IMR-90 (cell line): ENCODE measurements at regions of chr5 and their contacts with region 1.

Region 1: GRCh38 chr5:149434162-149435014 is 55.3 kb upstream of the IL17B start:
- DNase-seq: peak; percentile 82
- ATAC-seq: peak; percentile 55
- H3K4me3 ChIP-seq: no peak overlapping the region
- H3K27ac ChIP-seq: no peak overlapping the region
- H3K4me1 ChIP-seq: peaks cover 8% of the 10 kb centered on the region; the same call in 1 of the 2 replicates
- H3K27me3 ChIP-seq: no peaks in the 10 kb centered on the region
- CTCF ChIP-seq: peak; percentile 92
- POLR2A ChIP-seq: peak; percentile 55
- RAD21 ChIP-seq: peak; percentile 80

Region 2: GRCh38 chr5:147835386-147835798 is 1599.0 kb before region 1 on chr5:
- CTCF ChIA-PET with region 1: no interaction called
- POLR2A ChIA-PET with region 1: no interaction called
- dilution Hi-C with region 1: no loop called
- in situ Hi-C with region 1: no loop called
- intact Hi-C with region 1: no loop called
- DNase-seq: no peak
- ATAC-seq: no peak
- H3K4me3 ChIP-seq: no peak overlapping the region
- H3K27ac ChIP-seq: no peak overlapping the region
- H3K4me1 ChIP-seq: no peaks in the 10 kb centered on the region
- H3K27me3 ChIP-seq: no peaks in the 10 kb centered on the region
- CTCF ChIP-seq: no peak
- POLR2A ChIP-seq: no peak
- RAD21 ChIP-seq: no peak

Region 3: DNA sequence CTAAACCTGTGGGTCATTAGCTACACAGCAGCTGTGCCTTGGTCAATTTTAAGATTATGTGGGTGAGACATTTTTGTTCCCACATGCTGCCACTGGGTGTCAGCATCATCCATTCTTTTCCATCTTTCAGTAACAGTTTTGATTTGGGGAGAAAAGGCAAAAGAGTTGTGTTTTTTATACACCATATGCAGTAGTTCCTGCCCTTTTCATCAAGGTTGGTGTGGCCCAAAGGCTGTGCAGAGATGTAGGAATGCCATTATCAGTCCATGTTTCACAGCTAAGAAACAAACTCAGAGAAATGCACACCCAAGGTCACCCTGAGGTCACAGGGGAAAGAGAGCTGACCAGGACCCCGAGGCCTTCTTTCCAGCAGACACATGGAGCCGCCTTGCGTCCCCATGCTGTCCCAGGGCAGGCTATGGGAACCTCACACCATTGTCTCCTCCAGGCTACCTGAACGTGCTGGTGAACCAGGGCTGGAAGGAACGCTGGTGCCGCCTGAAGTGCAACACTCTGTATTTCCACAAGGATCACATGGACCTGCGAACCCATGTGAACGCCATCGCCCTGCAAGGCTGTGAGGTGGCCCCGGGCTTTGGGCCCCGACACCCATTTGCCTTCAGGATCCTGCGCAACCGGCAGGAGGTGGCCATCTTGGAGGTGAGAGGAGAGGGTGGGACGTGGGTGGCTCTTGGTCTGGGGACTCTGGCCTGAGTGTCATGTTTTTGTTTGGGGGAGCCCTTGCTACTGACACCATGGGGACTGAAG is 116.9 kb before region 1 on chr5:
- CTCF ChIA-PET with region 1: interaction called, 3 read pairs
- POLR2A ChIA-PET with region 1: no interaction called
- dilution Hi-C with region 1: no loop called
- in situ Hi-C with region 1: no loop called
- intact Hi-C with region 1: loop called (anchors 2 kb)
- DNase-seq: peak; percentile 58
- ATAC-seq: peak; percentile 56
- H3K4me3 ChIP-seq: no peak overlapping the region
- H3K27ac ChIP-seq: 0 out of 2 replicates have a peak overlapping the region, but pooled peaks have one; percentile 4
- H3K4me1 ChIP-seq: peaks cover 6% of the 10 kb centered on the region
- H3K27me3 ChIP-seq: no peaks in the 10 kb centered on the region
- CTCF ChIP-seq: peak; percentile 77
- POLR2A ChIP-seq: no peak
- RAD21 ChIP-seq: peak; percentile 76

Region 4: DNA sequence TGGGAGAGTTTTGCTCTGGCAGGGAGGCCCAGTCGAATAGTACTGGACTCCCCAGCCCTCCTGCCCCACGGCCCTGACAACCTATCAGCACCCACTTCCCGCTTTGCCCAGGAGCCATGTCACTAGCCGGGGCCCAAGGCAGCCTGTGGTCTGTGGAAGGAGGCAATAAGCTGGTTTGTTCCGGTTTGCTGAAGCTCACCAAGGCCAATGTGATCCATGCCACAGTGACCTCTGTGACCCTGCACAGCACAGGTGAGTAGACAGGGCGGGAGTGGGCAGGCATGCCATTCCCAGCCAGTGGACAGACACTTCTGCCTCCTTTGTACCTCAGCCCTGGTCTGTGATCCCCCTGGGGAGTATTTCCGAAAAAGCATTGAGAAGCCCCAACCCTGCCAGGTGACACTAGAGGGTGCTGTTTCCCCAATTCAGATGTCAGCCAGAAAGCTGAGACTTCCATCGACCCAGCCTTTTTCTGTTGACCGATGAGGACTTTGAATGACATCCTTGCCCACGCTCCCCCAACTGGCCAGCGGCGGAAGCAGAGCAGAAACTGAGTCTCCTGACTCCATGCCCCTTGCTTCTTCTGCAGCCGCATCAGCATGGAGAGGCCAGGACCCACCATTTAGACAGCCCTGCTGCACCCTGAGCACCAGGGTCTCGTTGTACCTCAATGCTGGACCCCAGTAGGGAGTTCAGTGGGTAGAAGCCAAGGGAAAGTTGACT is 67.0 kb before region 1 on chr5:
- CTCF ChIA-PET with region 1: interaction called, 11 read pairs
- POLR2A ChIA-PET with region 1: no interaction called
- dilution Hi-C with region 1: no loop called
- in situ Hi-C with region 1: no loop called
- intact Hi-C with region 1: loop called (anchors 1 kb)
- DNase-seq: peak; percentile 70
- ATAC-seq: peak; percentile 85
- H3K4me3 ChIP-seq: no peak overlapping the region
- H3K27ac ChIP-seq: no peak overlapping the region
- H3K4me1 ChIP-seq: 0 out of 2 replicates have a peak, but pooled peaks cover 2% of the 10 kb centered on the region
- H3K27me3 ChIP-seq: no peaks in the 10 kb centered on the region
- CTCF ChIP-seq: peak; percentile 88
- POLR2A ChIP-seq: no peak
- RAD21 ChIP-seq: peak; percentile 83

Region 5: GRCh38 chr5:149381987-149382340 is 52.4 kb before region 1 on chr5:
- CTCF ChIA-PET with region 1: interaction called, 19 read pairs
- POLR2A ChIA-PET with region 1: interaction called, 3 read pairs
- dilution Hi-C with region 1: no loop called
- in situ Hi-C with region 1: loop called (anchors 5 kb)
- intact Hi-C with region 1: loop called (anchors 1 kb)
- DNase-seq: peak; percentile 66
- ATAC-seq: peak; percentile 93
- H3K4me3 ChIP-seq: no peak overlapping the region
- H3K27ac ChIP-seq: peak overlapping the region; percentile 50; the same call in 1 of the 2 replicates
- H3K4me1 ChIP-seq: peaks cover 22% of the 10 kb centered on the region
- H3K27me3 ChIP-seq: no peaks in the 10 kb centered on the region
- CTCF ChIP-seq: peak; percentile 92
- POLR2A ChIP-seq: no peak
- RAD21 ChIP-seq: peak; percentile 90

Region 6: GRCh38 chr5:149387081-149387631 is 47.2 kb before region 1 on chr5:
- CTCF ChIA-PET with region 1: interaction called, 19 read pairs
- POLR2A ChIA-PET with region 1: interaction called, 3 read pairs
- dilution Hi-C with region 1: no loop called
- in situ Hi-C with region 1: loop called (anchors 5 kb)
- intact Hi-C with region 1: loop called (anchors 1 kb)
- DNase-seq: peak; percentile 70
- ATAC-seq: peak; percentile 21
- H3K4me3 ChIP-seq: no peak overlapping the region
- H3K27ac ChIP-seq: peak overlapping the region; percentile 60; the same call in 1 of the 2 replicates
- H3K4me1 ChIP-seq: peaks cover 26% of the 10 kb centered on the region
- H3K27me3 ChIP-seq: no peaks in the 10 kb centered on the region
- CTCF ChIP-seq: no peak
- POLR2A ChIP-seq: no peak
- RAD21 ChIP-seq: no peak

Region 7: DNA sequence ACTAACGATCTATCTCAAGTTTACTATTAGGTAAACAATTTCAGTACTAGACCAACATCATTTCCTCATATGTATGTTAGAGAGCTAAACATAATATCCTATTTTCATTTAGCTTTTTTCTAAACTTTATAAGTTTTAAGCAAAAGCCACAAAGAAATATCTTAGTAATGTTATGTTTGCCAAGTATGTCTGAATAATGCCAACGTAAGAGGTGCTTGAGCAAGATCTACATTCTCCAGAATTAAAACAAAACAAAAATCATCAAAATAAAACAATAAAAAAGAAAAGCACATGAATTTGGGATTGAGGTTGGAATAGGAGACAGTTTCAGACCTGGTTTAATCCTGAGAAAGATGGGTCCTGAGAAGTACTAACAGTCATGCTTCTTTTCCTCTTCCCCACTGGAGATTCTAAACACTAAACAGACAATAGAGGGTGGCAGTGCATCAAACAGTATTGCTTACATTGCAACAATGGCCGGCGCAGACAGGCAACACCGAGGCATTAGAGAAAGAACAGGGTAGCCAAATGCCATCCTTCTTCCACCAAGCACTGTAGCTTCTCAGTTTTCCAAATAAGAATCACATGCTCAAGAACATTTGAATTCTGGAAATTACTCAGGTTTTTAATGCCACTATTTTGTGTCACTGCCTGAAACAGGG is 83.2 kb after region 1 on chr5:
- CTCF ChIA-PET with region 1: no interaction called
- POLR2A ChIA-PET with region 1: no interaction called
- dilution Hi-C with region 1: no loop called
- in situ Hi-C with region 1: no loop called
- intact Hi-C with region 1: no loop called
- DNase-seq: peak; percentile 23
- ATAC-seq: peak; percentile 12
- H3K4me3 ChIP-seq: no peak overlapping the region
- H3K27ac ChIP-seq: peak overlapping the region; percentile 84; the same call in 1 of the 2 replicates
- H3K4me1 ChIP-seq: peaks cover 14% of the 10 kb centered on the region
- H3K27me3 ChIP-seq: no peaks in the 10 kb centered on the region
- CTCF ChIP-seq: no peak
- POLR2A ChIP-seq: no peak
- RAD21 ChIP-seq: no peak

Region 8: GRCh38 chr5:149646564-149646963 is 212.2 kb after region 1 on chr5:
- CTCF ChIA-PET with region 1: no interaction called
- POLR2A ChIA-PET with region 1: no interaction called
- dilution Hi-C with region 1: no loop called
- in situ Hi-C with region 1: no loop called
- intact Hi-C with region 1: no loop called
- DNase-seq: peak; percentile 21
- ATAC-seq: no peak
- H3K4me3 ChIP-seq: no peak overlapping the region
- H3K27ac ChIP-seq: no peak overlapping the region
- H3K4me1 ChIP-seq: no peaks in the 10 kb centered on the region
- H3K27me3 ChIP-seq: peaks cover 42% of the 10 kb centered on the region
- CTCF ChIP-seq: no peak
- POLR2A ChIP-seq: no peak
- RAD21 ChIP-seq: no peak